Activated CD8-positive, alpha-beta T cell treated with anti-CD3 and anti-CD28 coated beads, Interleukin-2, amount 10 ng/mL, durations not matched to agents 7 days and 5 days (primary cell): ENCODE measurements at regions of chr12 and their contacts with region 1.

Region 1: GRCh38 chr12:52980693-52981423 is 25.4 kb upstream of the EIF4B start:
- DNase-seq: peak; percentile 90
- ATAC-seq: peak; percentile 91
- H3K4me3 Mint-ChIP-seq: no peak overlapping the region
- H3K27ac Mint-ChIP-seq: no peak overlapping the region
- H3K4me1 Mint-ChIP-seq: no peaks in the 10 kb centered on the region
- H3K27me3 Mint-ChIP-seq: peaks cover 30% of the 10 kb centered on the region

Region 2: GRCh38 chr12:52870351-52871290 is 110.2 kb before region 1 on chr12:
- CTCF ChIA-PET with region 1: interaction called, 12 read pairs
- POLR2A ChIA-PET with region 1: no interaction called
- DNase-seq: peak; percentile 85
- ATAC-seq: peak; percentile 60
- H3K4me3 Mint-ChIP-seq: no peak overlapping the region
- H3K27ac Mint-ChIP-seq: no peak overlapping the region
- H3K4me1 Mint-ChIP-seq: peaks cover 36% of the 10 kb centered on the region
- H3K27me3 Mint-ChIP-seq: peaks cover 6% of the 10 kb centered on the region

Region 3: DNA sequence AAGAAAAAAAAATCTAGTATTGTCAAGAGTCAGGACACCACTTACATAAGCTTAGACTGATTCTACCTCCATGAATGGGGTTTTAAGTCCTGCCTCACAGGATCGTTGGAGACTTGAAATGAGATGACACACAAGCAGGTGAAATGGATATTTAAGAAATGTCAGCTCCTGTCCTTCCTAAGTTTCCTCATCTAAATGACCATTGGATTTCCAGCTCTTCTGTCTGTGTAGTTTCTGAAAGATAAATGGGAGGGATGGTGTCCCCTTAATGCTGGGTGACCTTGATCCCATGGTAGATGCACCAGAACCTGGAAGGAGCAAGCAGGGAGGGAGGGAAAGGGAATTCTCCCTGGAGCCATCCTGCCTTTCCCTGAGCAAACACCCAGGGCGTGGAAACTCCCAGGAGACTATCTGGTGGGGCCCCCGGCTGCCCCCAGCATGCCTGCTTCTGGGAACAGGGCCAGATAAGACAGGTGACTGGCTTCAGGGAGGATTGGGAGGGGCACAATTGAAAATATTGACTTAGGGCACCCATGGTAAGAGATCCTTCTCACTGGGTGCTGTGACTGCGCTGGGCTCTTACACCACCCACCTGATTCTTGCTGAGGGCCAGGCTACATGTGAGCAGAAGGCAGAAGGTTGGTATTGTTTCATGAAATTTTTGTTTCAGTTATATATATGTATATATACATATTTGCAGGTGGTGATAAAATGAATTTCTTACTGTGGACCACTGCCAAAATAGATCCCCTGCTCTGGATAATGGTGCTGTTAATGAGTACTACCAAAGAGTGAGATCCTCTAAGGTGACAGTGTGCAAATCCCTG is 85.6 kb before region 1 on chr12:
- CTCF ChIA-PET with region 1: interaction called, 17 read pairs
- POLR2A ChIA-PET with region 1: no interaction called
- DNase-seq: no peak
- ATAC-seq: no peak
- H3K4me3 Mint-ChIP-seq: no peak overlapping the region
- H3K27ac Mint-ChIP-seq: no peak overlapping the region
- H3K4me1 Mint-ChIP-seq: no peaks in the 10 kb centered on the region
- H3K27me3 Mint-ChIP-seq: peaks cover 2% of the 10 kb centered on the region

Region 4: GRCh38 chr12:52920937-52921826 is 59.7 kb before region 1 on chr12:
- CTCF ChIA-PET with region 1: interaction called, 12 read pairs
- POLR2A ChIA-PET with region 1: no interaction called
- DNase-seq: no peak
- ATAC-seq: no peak
- H3K4me3 Mint-ChIP-seq: no peak overlapping the region
- H3K27ac Mint-ChIP-seq: no peak overlapping the region
- H3K4me1 Mint-ChIP-seq: peaks cover 6% of the 10 kb centered on the region
- H3K27me3 Mint-ChIP-seq: peaks cover 11% of the 10 kb centered on the region

Region 5: DNA sequence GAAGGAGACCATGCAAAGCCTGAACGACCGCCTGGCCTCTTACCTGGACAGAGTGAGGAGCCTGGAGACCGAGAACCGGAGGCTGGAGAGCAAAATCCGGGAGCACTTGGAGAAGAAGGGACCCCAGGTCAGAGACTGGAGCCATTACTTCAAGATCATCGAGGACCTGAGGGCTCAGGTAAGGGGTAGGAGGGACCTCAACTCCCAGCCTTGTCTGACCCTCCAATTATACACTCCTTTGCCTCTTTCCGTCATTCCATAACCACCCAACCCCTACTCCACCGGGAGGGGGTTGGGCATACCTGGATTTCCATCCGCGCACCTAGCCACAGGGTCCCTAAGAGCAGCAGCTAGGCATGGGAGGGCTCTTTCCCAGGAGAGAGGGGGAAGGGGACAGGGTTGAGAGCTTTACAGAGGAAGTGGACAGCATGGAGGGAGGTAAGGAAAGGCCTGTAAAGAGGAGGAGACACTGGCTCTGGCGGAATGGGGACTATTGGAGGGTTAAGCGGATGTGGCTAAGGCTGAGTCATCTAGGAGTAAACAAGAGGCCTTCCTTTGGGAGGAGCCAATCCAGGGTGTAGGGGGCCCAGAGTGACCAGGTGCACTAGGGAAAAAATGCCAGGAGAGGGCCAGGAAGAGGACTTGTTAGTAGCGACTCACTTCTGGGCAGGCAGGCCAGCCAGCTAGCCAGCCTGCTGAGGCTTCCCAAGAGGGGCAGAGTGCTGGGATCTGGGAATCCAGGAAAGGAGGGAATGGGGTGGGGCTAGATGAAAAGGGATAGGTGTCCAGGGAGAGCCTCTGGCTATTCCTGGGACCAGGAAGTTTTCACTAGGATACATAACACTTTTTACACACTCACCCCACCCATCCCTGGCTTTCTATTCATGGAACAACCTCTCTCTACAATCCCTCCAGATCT is 31.2 kb before region 1 on chr12:
- CTCF ChIA-PET with region 1: interaction called, 11 read pairs
- POLR2A ChIA-PET with region 1: no interaction called
- DNase-seq: no peak
- ATAC-seq: no peak
- H3K4me3 Mint-ChIP-seq: peak overlapping the region; percentile 62
- H3K27ac Mint-ChIP-seq: no peak overlapping the region
- H3K4me1 Mint-ChIP-seq: peaks cover 2% of the 10 kb centered on the region
- H3K27me3 Mint-ChIP-seq: no peaks in the 10 kb centered on the region

Region 6: GRCh38 chr12:52969828-52970569 is 10.9 kb before region 1 on chr12:
- CTCF ChIA-PET with region 1: interaction called, 23 read pairs
- POLR2A ChIA-PET with region 1: no interaction called
- DNase-seq: no peak
- ATAC-seq: no peak
- H3K4me3 Mint-ChIP-seq: no peak overlapping the region
- H3K27ac Mint-ChIP-seq: no peak overlapping the region
- H3K4me1 Mint-ChIP-seq: no peaks in the 10 kb centered on the region
- H3K27me3 Mint-ChIP-seq: peaks cover 13% of the 10 kb centered on the region

Region 7: GRCh38 chr12:53061404-53062010 is 80.6 kb after region 1 on chr12:
- CTCF ChIA-PET with region 1: no interaction called
- POLR2A ChIA-PET with region 1: no interaction called
- DNase-seq: no peak
- ATAC-seq: no peak
- H3K4me3 Mint-ChIP-seq: no peak overlapping the region
- H3K27ac Mint-ChIP-seq: no peak overlapping the region
- H3K4me1 Mint-ChIP-seq: peaks cover 7% of the 10 kb centered on the region
- H3K27me3 Mint-ChIP-seq: no peaks in the 10 kb centered on the region